PC-9 (cell line): ENCODE measurements at regions of chr4 and their contacts with region 1.

Region 1: GRCh38 chr4:39638354-39639240 is at the start of gene SMIM14:
- DNase-seq: peak; percentile 90 to 99
- H3K4me3 ChIP-seq: peak within 1 kb of the TSS; percentile 79
- H3K27ac ChIP-seq: peak within 1 kb of the TSS; percentile 93
- H3K4me1 ChIP-seq: peaks cover 34% of the 10 kb centered on the region
- H3K27me3 ChIP-seq: no peaks in the 10 kb centered on the region
- CTCF ChIP-seq: no peak
- total RNA-seq, gene SMIM14: 64.1 and 71.2 TPM in 2 replicates

Region 2: GRCh38 chr4:39458505-39459300 is 179.9 kb before region 1 on chr4 and contains the starts of genes LIAS and RPL9:
- CTCF ChIA-PET with region 1: no interaction called
- POLR2A ChIA-PET with region 1: interaction called, 14 read pairs
- intact Hi-C with region 1: no loop called
- DNase-seq: peak; percentile 93 to 95
- H3K4me3 ChIP-seq: peak within 1 kb of the TSS; percentile 97
- H3K27ac ChIP-seq: peak within 1 kb of the TSS; percentile 94
- H3K4me1 ChIP-seq: peaks cover 20% of the 10 kb centered on the region
- H3K27me3 ChIP-seq: no peaks in the 10 kb centered on the region
- CTCF ChIP-seq: no peak
- total RNA-seq, gene LIAS: 16.3 and 16.4 TPM in 2 replicates
- total RNA-seq, gene RPL9: 792 and 1,023 TPM in 2 replicates

Region 3: GRCh38 chr4:39527273-39528060 is 111.1 kb before region 1 on chr4 and contains the start of gene UGDH:
- CTCF ChIA-PET with region 1: interaction called, 5 read pairs
- POLR2A ChIA-PET with region 1: interaction called, 18 read pairs
- intact Hi-C with region 1: loop called (anchors 1 kb)
- DNase-seq: peak; percentile 93 to 98
- H3K4me3 ChIP-seq: peak within 1 kb of the TSS; percentile 78
- H3K27ac ChIP-seq: peak within 1 kb of the TSS; percentile 95
- H3K4me1 ChIP-seq: peaks cover 40% of the 10 kb centered on the region
- H3K27me3 ChIP-seq: no peaks in the 10 kb centered on the region
- CTCF ChIP-seq: no peak
- total RNA-seq, gene UGDH: 88.6 and 98.5 TPM in 2 replicates

Region 4: GRCh38 chr4:39621582-39621981 is 17.0 kb before region 1 on chr4:
- CTCF ChIA-PET with region 1: no interaction called
- POLR2A ChIA-PET with region 1: interaction called, 8 read pairs
- intact Hi-C with region 1: loop called (anchors 1 kb)
- DNase-seq: peak; percentile 64 to 66
- H3K4me3 ChIP-seq: no peak overlapping the region
- H3K27ac ChIP-seq: peak overlapping the region; percentile 50
- H3K4me1 ChIP-seq: peaks cover 27% of the 10 kb centered on the region
- H3K27me3 ChIP-seq: no peaks in the 10 kb centered on the region
- CTCF ChIP-seq: no peak

Region 5: GRCh38 chr4:39977489-39978377 is 339.1 kb after region 1 on chr4 and contains the start of gene PDS5A:
- CTCF ChIA-PET with region 1: no interaction called
- POLR2A ChIA-PET with region 1: no interaction called
- intact Hi-C with region 1: loop called (anchors 10 kb)
- DNase-seq: peak; percentile 72 to 93
- H3K4me3 ChIP-seq: peak within 1 kb of the TSS; percentile 93
- H3K27ac ChIP-seq: peak within 1 kb of the TSS; percentile 72
- H3K4me1 ChIP-seq: peaks cover 18% of the 10 kb centered on the region
- H3K27me3 ChIP-seq: no peaks in the 10 kb centered on the region
- CTCF ChIP-seq: peak; percentile 73
- total RNA-seq, gene PDS5A: 78.9 and 86.4 TPM in 2 replicates